ENCODE measurements at regions of chr12 and their contacts with region 1.

Region 1: DNA sequence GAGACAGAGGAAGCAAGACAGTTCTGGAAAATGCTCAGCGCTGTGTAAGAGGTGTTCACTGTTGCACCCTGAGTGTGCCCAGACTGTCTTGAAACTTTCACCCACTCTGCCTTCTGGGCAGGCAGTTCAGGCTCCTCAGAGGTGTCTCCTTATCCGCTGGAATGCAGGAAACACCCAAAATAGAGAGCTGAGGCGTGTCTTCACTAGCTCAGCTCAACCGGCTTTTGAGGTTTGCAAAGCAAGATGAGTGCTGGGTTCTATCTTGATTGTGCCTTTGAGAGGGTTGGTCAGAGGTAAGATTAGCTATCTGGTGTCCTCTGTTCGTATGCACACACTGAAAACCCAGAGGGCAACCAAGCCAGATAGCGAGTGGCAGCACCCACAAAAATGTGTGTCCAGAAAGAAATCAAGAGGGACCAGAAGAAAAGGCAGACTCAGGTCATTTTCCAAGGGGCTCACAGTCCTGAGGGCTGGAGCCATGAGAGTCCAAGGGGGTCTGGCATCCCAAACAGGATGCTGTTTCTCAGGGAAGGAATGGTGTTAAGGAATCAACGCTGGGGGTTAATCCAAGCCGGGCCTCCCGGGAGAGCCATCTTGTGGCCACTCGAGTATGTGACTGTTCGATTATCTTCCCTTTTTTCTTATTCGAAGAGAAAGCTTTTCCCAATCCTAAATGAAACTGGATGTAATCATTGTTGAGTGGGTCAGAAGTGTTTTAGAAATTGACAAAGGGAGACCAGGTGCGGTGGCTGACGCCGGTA is 47.1 kb downstream of the TBX3 start:
- DNase-seq: no peak
- ATAC-seq: peak; percentile 73
- H3K4me3 ChIP-seq: peak overlapping the region in 1 of 2 experiments; percentile 2; a peak in 1 of 4 replicates
- H3K27ac ChIP-seq: peak overlapping the region; percentile 19
- H3K4me1 ChIP-seq: peaks cover 7 to 19% of the 10 kb centered on the region in 2 experiments
- H3K27me3 ChIP-seq: no peaks in the 10 kb centered on the region
- CTCF ChIP-seq: peak; percentile 46 to 61 (median 59); a peak in 5 of 6 replicates
- POLR2A ChIP-seq: no peak
- RAD21 ChIP-seq: peak; percentile 48

Region 2: GRCh38 chr12:114625294-114625851 is 11.5 kb before region 1 on chr12:
- CTCF ChIA-PET with region 1: interaction called, 21 read pairs
- POLR2A ChIA-PET with region 1: no interaction called
- RAD21 ChIA-PET with region 1: interaction called in 1 of 2 experiments, 3 read pairs
- intact Hi-C with region 1: no loop called
- DNase-seq: peak; percentile 52
- ATAC-seq: peak; percentile 89
- H3K4me3 ChIP-seq: no peak overlapping the region
- H3K27ac ChIP-seq: no peak overlapping the region
- H3K4me1 ChIP-seq: peaks cover 12 to 18% of the 10 kb centered on the region in 2 experiments; a peak in 3 of 4 replicates
- H3K27me3 ChIP-seq: no peaks in the 10 kb centered on the region
- CTCF ChIP-seq: peak; percentile 73 to 89 (median 87)
- POLR2A ChIP-seq: no peak
- RAD21 ChIP-seq: peak; percentile 85

Region 3: GRCh38 chr12:114655934-114656749 is 19.2 kb after region 1 on chr12:
- CTCF ChIA-PET with region 1: interaction called, 10 read pairs
- POLR2A ChIA-PET with region 1: no interaction called
- RAD21 ChIA-PET with region 1: no interaction called
- intact Hi-C with region 1: no loop called
- DNase-seq: peak; percentile 35
- ATAC-seq: peak; percentile 87
- H3K4me3 ChIP-seq: 0 out of 4 replicates have a peak overlapping the region, but pooled peaks of 1 of the 2 experiments have one; percentile 6
- H3K27ac ChIP-seq: no peak overlapping the region
- H3K4me1 ChIP-seq: peaks cover 6 to 22% of the 10 kb centered on the region in 2 experiments; a peak in 3 of 4 replicates
- H3K27me3 ChIP-seq: no peaks in the 10 kb centered on the region
- CTCF ChIP-seq: no peak
- POLR2A ChIP-seq: no peak
- RAD21 ChIP-seq: no peak

Measured in HCT116 (cell line).